Right cardiac atrium (tissue), 5 donors: ENCODE measurements at regions of chr11 and their contacts with region 1.

Region 1: GRCh38 chr11:75388386-75389275 is 10.7 kb upstream of the RPS3 start:
- DNase-seq: peak; percentile 79 to 83 (median 81)
- ATAC-seq: peak; percentile 47 to 54
- H3K4me3 ChIP-seq: no peak overlapping the region
- H3K27ac ChIP-seq: no peak overlapping the region
- H3K4me1 ChIP-seq: peaks cover 2% of the 10 kb centered on the region
- H3K27me3 ChIP-seq: no peaks in the 10 kb centered on the region

Region 2: DNA sequence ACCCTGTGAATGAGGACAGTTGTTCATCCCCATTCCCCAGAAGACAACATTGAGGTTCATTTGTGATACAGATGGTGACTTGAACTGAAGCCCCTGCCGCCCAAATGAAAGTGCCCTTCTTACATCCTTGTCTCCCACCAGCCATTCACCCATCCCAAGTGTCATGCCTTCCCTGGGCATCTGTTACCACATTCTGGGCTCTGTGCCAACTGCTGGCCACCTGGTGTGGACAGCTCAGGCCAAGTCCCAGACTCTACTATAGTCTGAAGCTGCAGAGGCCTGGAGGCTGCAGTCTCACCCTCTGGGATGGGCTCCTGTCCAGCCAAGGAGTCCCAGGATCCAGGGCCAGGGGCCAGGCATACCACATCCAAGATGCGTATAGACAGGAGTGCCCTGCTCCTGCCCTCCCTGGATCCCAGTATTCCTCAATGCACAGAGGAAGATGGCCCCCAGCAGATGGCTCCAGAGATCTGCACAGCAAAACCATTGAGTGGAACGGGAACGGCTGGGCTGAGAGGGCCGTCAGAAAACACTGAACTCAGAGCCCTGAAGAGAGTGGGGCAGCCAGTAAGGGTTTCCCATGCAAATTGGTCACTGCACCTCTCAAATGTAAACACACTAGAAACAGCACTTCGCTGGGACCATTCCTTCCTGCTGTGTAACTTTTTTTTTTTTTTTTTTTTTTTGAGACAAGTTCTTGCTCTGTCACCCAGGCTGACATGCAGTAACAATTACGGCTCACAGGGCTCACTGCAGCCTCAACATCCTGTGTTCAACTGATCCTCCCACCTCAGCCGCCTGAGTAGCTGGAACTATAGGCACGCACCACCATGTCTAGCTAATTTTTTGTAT is 60.0 kb before region 1 on chr11:
- intact Hi-C with region 1: loop called in 3 of 4 experiments (anchors 2 to 5 kb)
- DNase-seq: peak; percentile 69 to 89 (median 81)
- ATAC-seq: peak; percentile 82 to 85
- H3K4me3 ChIP-seq: no peak overlapping the region
- H3K27ac ChIP-seq: no peak overlapping the region
- H3K4me1 ChIP-seq: peaks cover 2% of the 10 kb centered on the region
- H3K27me3 ChIP-seq: no peaks in the 10 kb centered on the region

Region 3: DNA sequence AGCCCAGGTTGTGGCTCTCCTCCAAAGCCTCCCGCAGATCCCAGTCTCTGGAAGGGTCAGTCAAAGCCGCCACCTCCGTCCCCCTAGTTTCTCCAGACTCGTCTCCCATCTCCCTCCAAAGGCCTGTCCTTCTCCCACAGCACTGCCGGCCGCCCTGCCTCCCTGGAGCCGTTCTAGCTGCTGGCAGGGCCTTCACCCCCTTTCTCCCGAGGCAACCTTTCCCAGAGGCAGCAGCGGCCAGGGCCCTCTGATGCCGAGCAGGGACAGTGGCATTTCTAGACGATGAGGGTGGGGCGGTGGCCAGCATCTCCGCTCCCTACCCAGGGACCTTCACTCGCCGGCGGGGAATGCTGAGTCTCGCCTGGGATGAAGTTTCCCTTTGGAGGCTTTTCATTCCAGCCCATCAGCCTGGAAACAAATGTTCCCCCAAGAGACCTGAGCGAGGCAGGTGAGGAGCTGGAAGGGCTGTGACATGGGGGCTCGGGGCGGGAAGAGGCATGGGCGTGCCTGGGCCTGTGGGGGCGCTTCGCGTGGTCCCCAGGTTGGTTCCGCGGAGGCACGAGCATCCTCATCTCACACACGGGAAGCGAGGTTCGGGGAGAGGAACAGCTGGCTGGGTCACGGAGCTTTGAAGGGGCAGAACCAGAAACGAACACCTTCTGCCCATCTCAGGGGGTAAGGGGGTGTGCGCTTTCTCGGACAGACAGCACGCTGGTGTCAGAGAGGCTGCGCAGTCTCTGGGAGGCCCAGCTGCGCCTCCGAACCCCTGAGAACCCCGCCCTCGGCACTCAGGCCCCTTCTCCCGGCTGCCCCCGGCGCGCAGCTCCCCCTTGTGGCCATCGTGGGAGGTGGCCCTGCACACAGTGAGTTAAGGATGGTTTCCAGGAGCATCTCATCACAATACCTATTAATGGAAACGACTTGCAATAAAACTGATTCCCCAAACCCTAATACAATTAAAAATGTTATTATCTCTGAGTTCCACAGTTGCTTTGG is 62.5 kb after region 1 on chr11:
- intact Hi-C with region 1: no loop called
- DNase-seq: peak in 2 of 3 donors; percentile 56
- ATAC-seq: no peak
- H3K4me3 ChIP-seq: no peak overlapping the region
- H3K27ac ChIP-seq: no peak overlapping the region
- H3K4me1 ChIP-seq: no peaks in the 10 kb centered on the region
- H3K27me3 ChIP-seq: no peaks in the 10 kb centered on the region

Region 4: DNA sequence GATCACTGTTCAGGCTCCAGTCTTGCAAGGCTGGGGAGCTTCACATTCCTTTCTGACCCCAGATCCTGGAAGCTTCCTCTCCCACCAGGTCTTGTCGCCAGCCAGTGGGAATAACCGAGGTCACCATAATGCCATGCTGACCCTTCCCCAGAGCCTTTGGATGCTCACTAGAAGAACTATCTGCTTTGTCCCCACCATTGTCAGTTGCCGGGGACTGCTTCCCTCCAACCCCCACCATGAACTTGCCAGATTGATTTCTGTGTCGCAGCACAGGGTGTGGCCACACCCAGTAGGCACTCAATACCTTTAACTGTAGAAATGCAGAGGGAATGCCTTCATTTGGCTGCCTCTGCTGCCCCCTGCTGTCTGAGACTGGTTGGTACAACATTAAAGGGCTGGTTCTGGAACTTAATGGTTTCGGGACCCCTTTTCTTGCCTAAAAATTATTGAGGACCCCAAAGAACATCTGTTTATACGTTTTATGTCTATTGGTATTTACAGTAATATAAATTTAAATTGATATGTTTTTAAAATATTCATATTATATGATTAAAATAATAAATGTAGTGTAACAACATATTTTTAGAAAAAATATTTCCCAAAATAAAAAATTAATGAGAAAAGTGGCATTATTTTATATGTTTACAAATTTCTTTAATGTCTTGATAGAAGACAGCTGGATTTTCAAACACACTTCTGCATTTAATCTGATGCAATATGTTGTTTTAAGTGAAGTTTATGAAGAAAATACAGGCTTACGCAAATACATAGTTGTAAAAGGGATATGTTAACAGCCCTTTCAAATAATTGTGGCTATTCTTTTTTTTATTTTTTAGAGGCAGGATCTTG is 143.8 kb after region 1 on chr11:
- intact Hi-C with region 1: loop called in 2 of 4 experiments (anchors 5 kb)
- DNase-seq: peak; percentile 68 to 81 (median 76)
- ATAC-seq: peak; percentile 42 to 51
- H3K4me3 ChIP-seq: no peak overlapping the region
- H3K27ac ChIP-seq: no peak overlapping the region
- H3K4me1 ChIP-seq: no peaks in the 10 kb centered on the region
- H3K27me3 ChIP-seq: no peaks in the 10 kb centered on the region